Activated CD4-positive, alpha-beta memory T cell treated with anti-CD3 and anti-CD28 coated beads for 36 hours (primary cell): ENCODE measurements at regions of chr22 and their contacts with region 1.

Region 1: DNA sequence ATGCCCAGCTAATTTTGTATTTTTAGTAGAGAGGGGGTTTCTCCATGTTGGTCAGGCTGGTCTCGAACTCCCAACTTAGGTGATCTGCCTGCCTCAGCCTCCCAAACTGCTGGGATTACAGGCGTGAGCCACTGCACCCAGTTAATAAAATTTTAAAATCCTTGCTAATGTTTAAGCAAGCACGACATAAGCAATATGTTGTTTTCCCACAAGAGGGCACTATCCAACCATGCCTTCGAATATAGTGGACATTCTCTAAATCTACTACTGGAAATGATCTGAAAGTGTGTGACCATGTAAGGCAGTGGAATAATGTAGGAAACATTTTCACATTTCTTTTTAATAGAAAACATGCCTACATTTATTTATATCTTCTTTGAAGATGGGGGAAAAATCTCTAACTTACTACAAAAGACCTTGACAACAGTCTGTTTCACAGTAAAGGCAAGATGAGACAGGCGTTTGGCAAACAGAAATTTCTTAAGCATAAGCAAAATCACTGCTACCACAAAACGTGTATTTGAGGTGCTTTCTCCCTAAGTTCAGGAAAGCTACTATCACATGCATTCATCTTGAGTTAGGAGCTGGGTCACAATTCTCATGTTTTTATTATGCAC is 38.2 kb downstream of the PITPNB start:
- DNase-seq: no peak
- H3K4me3 Mint-ChIP-seq: no peak overlapping the region
- H3K27ac Mint-ChIP-seq: no peak overlapping the region
- H3K4me1 Mint-ChIP-seq: peaks cover 27% of the 10 kb centered on the region
- H3K27me3 Mint-ChIP-seq: no peaks in the 10 kb centered on the region

Region 2: DNA sequence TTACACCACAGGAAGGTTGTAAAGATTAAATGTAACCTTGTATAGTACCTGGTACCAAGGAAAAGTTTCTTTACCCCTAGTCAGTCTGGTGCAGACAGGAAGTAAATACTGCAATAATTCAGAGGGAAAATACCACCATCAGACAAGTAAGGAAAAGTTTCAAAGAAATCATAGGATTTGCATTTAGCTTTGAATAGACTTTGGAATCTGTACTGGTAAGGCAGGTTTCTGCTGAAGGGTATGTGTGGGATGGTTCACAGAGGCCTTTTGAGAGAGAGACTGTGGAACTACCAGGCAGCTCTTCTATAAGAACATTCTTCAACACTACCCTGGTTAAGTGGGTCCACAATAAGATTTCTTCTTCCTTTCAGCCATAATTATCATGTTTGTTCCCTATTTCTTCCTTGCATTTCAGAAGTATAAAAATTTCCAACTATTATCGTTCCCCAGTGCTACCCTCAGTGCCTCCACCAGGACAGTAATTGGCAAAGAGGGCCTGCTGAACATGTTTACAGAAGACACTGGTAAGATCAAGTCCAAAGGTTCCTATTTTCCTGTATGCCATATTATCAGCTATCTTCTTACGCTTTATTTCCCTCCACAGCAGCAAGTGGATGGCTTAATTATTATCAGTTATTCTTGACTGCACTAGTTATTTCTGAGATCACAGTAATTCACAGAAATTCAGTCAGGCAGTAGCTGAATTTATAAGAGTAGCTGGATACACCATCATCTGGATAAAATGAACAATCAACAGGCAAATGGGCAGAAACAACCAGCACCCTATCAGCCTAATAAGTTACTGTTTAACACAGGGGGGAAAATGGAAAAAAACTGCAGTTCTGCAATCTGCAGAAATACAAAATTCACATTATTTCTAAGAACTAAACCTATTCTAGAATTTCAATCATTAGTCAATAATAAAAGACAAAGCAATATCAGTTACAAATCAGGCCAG is 10.4 kb before region 1 on chr22:
- CTCF ChIA-PET with region 1: interaction called, 14 read pairs
- POLR2A ChIA-PET with region 1: no interaction called
- intact Hi-C with region 1: no loop called
- DNase-seq: no peak
- H3K4me3 Mint-ChIP-seq: no peak overlapping the region
- H3K27ac Mint-ChIP-seq: no peak overlapping the region
- H3K4me1 Mint-ChIP-seq: peaks cover 55% of the 10 kb centered on the region
- H3K27me3 Mint-ChIP-seq: no peaks in the 10 kb centered on the region

Region 3: DNA sequence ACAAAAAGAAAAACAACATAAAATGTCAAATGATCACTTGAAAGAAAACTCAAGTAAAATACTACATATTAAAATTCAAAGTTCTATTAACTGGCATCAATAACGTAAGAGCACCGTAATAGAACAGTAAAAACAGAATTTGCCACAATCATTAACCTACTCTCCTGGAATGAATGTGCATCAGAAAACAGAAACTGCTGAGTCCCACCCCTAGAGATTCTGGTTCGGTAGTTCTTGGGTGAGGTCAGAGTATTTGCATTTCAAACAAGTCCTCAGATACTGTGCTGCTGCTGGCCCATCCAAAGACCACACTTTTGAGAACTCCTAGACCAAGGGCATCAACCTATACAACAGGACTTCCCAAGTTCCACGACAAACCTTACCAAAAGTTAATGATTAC is 14.7 kb after region 1 on chr22:
- CTCF ChIA-PET with region 1: interaction called, 74 read pairs
- POLR2A ChIA-PET with region 1: no interaction called
- intact Hi-C with region 1: no loop called
- DNase-seq: no peak
- H3K4me3 Mint-ChIP-seq: no peak overlapping the region
- H3K27ac Mint-ChIP-seq: peak overlapping the region; percentile 64
- H3K4me1 Mint-ChIP-seq: peaks cover 25% of the 10 kb centered on the region
- H3K27me3 Mint-ChIP-seq: no peaks in the 10 kb centered on the region